Heart left ventricle (tissue), 16 donors: ENCODE measurements at regions of chr2 and their contacts with region 1.

Region 1: DNA sequence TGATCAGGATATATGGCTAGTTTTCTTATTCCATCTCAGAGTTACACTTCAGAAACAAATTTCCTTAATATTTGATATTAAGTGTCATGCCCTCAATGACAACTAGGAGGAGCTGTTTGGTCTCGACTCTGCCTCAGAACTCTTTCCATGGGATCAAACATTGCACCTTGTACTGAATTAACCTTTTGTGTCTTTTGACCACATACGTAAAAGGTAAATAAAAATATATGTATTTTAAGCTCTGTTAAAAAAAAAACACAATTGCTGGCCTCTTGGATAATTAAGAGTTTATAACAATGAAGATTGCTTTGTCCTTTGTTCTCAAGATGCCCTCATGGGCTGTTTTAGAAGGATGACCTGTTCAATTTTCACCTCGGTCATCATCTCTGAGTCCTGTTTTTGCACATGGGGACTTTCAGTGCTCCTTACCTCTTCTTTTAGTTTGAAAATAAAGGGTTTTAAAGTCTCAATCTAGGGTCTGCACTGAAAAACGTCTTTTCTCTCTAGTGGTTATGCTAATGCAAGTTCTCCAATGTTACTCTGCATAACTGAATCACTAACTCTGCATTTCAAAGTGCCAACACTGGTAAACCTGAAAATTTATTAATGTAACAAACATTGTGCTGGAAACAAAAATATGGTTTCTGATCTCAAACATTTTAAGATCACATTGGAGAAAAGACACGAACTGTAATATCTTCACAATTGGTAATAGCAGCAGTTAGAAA is 18.8 kb upstream of the FN1 start:
- DNase-seq: no peak
- ATAC-seq: no peak
- H3K4me3 ChIP-seq: no peak overlapping the region
- H3K27ac ChIP-seq: no peak overlapping the region
- H3K4me1 ChIP-seq: peaks cover 0 to 3% (median 0%) of the 10 kb centered on the region in 12 donors
- H3K27me3 ChIP-seq: peaks cover 0 to 3% (median 0%) of the 10 kb centered on the region in 9 donors
- CTCF ChIP-seq: peak; percentile 59 to 89 (median 72)
- POLR2A ChIP-seq: no peak

Region 2: GRCh38 chr2:215711471-215712034 is 256.9 kb after region 1 on chr2:
- intact Hi-C with region 1: loop called in 2 of 10 experiments (anchors 10 kb)
- DNase-seq: peak in 1 of 5 donors; percentile 16
- ATAC-seq: peak; percentile 45 to 85 (median 72)
- H3K4me3 ChIP-seq: no peak overlapping the region
- H3K27ac ChIP-seq: peak overlapping the region in 11 of 12 donors; percentile 0 to 76 (median 37)
- H3K4me1 ChIP-seq: peaks cover 0 to 36% (median 19%) of the 10 kb centered on the region in 12 donors
- H3K27me3 ChIP-seq: no peaks in the 10 kb centered on the region
- CTCF ChIP-seq: no peak
- POLR2A ChIP-seq: no peak

Region 3: DNA sequence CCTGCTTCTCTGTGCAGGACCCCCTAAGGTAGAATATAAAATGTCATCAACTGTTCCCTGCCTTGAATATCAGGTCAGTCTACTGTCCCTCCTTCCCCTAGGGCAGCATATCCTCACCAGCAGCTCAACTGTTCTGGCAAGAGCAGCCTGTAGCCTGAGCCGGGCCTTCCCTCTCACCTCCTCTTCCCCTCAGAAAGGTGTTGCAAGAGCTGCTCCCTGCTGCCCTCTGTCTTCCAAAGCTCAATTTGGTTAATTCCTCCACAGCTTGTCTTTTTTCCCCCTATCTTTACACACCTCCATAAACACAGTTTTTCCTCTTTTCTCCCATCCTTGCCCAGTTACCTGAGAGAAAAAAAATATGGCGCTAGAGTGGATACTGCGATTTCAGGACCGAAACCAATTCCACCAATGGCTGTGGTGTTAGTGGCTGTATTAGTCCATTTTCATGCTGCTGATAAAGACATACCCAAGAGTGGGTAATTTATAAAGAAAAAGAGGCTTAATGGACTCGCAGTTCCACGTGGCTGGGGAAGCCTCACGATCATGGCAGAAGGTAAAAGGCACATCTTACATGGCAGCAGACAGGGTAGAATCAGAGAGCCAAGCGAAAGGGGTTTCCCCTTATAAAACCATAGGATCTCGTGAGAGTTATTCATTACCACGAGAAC is 374.0 kb after region 1 on chr2:
- intact Hi-C with region 1: loop called in 3 of 10 experiments (anchors 5 to 10 kb)
- DNase-seq: peak in 3 of 5 donors; percentile 26 to 42 (median 32)
- ATAC-seq: no peak
- H3K4me3 ChIP-seq: no peak overlapping the region
- H3K27ac ChIP-seq: no peak overlapping the region
- H3K4me1 ChIP-seq: peaks cover 0 to 47% (median 5%) of the 10 kb centered on the region in 12 donors
- H3K27me3 ChIP-seq: no peaks in the 10 kb centered on the region
- CTCF ChIP-seq: peak in 11 of 12 donors; percentile 16 to 63 (median 43)
- POLR2A ChIP-seq: no peak

Region 4: GRCh38 chr2:215920244-215921100 is 465.8 kb after region 1 on chr2:
- intact Hi-C with region 1: loop called in 9 of 10 experiments (anchors 1 to 5 kb)
- DNase-seq: peak in 4 of 5 donors; percentile 57 to 69 (median 60)
- ATAC-seq: peak; percentile 86 to 96 (median 94)
- H3K4me3 ChIP-seq: no peak overlapping the region
- H3K27ac ChIP-seq: no peak overlapping the region
- H3K4me1 ChIP-seq: peaks cover 0 to 17% (median 0%) of the 10 kb centered on the region in 12 donors
- H3K27me3 ChIP-seq: no peaks in the 10 kb centered on the region
- CTCF ChIP-seq: peak; percentile 63 to 92 (median 81)
- POLR2A ChIP-seq: no peak

Region 5: DNA sequence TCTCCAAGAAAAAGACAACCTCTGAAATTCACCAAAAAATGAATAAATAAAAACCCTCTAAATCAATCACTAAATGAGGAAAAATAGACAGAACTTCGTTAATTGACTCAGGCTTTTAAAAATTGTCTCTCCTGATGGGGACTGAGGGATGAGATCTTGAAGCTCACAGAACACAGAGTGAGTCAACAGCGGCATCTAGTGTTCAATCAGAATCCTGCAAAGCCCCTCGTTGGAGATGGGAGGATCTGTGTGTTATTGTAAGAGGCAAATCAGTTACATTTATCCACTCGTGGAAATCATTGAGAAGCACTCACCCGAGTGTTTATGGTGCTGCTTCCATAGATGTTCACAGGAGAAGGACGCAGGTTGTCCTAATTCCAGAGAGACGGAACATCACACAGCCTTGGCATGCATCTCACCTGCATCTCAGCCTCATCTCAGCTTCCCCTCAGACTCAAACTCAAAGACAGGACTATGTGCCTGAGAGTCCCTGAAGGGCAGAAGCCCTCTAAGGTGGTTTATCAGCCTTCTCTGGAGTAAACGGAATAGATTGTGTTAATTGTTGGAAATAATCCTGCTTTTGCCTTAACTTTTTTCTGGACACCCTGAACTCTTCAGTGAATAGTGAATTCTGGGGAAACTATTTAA is 476.7 kb after region 1 on chr2:
- intact Hi-C with region 1: loop called in 1 of 10 experiments (anchors 5 kb)
- DNase-seq: peak in 4 of 5 donors; percentile 29 to 47 (median 40)
- ATAC-seq: peak in 3 of 4 donors; percentile 71 to 93 (median 83)
- H3K4me3 ChIP-seq: peak overlapping the region in 3 of 12 donors; percentile 2 to 28 (median 7)
- H3K27ac ChIP-seq: no peak overlapping the region
- H3K4me1 ChIP-seq: peaks cover 0 to 7% (median 0%) of the 10 kb centered on the region in 12 donors
- H3K27me3 ChIP-seq: no peaks in the 10 kb centered on the region
- CTCF ChIP-seq: peak; percentile 83 to 97 (median 91)
- POLR2A ChIP-seq: no peak